Activated CD8-positive, alpha-beta T cell treated with anti-CD3 and anti-CD28 coated beads for 36 hours (primary cell): ENCODE measurements at regions of chr20 and their contacts with region 1.

Region 1: DNA sequence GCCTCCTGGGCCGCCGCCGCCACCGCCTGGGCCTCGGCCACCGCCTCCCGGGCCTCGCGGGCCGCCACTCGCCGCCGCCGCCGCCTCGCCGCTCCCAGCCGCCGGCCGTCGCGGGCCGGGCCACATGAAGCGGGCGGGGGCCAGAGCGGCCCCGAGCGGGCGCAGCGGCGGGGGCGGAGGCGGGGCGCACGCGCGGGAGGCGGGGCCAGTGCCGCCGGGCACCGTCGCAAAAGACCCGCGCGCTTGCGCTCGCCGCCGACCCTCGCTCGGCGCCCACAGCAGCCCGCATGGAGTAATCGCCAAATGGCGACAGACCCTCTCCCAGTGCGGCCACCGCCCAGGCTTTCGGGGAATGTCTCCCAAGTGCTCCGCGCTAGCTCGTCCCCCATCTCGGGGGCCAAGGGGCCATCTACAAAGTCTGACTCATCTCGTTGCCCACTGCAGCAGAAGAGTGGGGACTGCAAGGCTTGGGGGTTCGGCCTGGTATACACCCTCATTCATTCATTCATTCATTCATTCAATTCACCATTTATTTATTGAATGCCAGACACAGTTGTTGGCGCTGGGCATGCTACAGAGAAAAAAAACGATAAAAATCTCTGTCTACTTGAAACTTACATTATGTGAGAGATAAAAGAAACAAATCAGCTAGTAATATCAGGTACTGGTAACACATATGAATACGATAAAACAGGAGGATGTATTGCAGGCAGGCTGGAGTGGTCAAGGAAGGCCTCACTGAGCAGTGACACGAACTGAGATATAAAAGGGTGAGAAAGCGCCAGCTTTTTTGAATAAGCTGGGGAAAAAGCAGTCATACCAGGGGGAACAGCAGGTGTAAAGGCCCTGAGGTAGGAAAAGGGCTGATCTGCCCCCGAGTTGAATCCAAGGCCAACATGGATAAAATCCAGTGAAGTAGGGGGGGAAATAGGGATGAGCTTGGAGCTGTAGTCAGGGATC is at the start of gene B4GALT5:
- DNase-seq: peak; percentile 66
- ATAC-seq: peak; percentile 84
- H3K4me3 Mint-ChIP-seq: peak within 1 kb of the TSS; percentile 87
- H3K27ac Mint-ChIP-seq: peak within 1 kb of the TSS; percentile 90
- H3K4me1 Mint-ChIP-seq: peaks cover 46% of the 10 kb centered on the region
- H3K27me3 Mint-ChIP-seq: no peaks in the 10 kb centered on the region
- CTCF ChIP-seq: no peak
- total RNA-seq, gene B4GALT5: 16.5 to 16.8 TPM

Region 2: GRCh38 chr20:49583669-49584417 is 130.2 kb before region 1 on chr20:
- CTCF ChIA-PET with region 1: no interaction called
- POLR2A ChIA-PET with region 1: no interaction called
- intact Hi-C with region 1: no loop called
- DNase-seq: no peak
- ATAC-seq: peak; percentile 52
- H3K4me3 Mint-ChIP-seq: no peak overlapping the region
- H3K27ac Mint-ChIP-seq: no peak overlapping the region
- H3K4me1 Mint-ChIP-seq: peaks cover 9% of the 10 kb centered on the region
- H3K27me3 Mint-ChIP-seq: peaks cover 22% of the 10 kb centered on the region
- CTCF ChIP-seq: no peak

Region 3: GRCh38 chr20:49668181-49668877 is 45.7 kb before region 1 on chr20:
- CTCF ChIA-PET with region 1: interaction called, 5 read pairs
- POLR2A ChIA-PET with region 1: interaction called, 4 read pairs
- intact Hi-C with region 1: loop called (anchors 5 kb)
- DNase-seq: peak; percentile 86
- ATAC-seq: peak; percentile 85
- H3K4me3 Mint-ChIP-seq: peak overlapping the region; percentile 43
- H3K27ac Mint-ChIP-seq: peak overlapping the region; percentile 13
- H3K4me1 Mint-ChIP-seq: peaks cover 49% of the 10 kb centered on the region
- H3K27me3 Mint-ChIP-seq: no peaks in the 10 kb centered on the region
- CTCF ChIP-seq: no peak

Region 4: GRCh38 chr20:49812463-49813304 is 98.7 kb after region 1 on chr20 and contains the start of gene SLC9A8:
- CTCF ChIA-PET with region 1: no interaction called
- POLR2A ChIA-PET with region 1: no interaction called
- intact Hi-C with region 1: loop called (anchors 10 kb)
- DNase-seq: peak; percentile 94
- ATAC-seq: peak; percentile 92
- H3K4me3 Mint-ChIP-seq: peak within 1 kb of the TSS; percentile 97
- H3K27ac Mint-ChIP-seq: peak within 1 kb of the TSS; percentile 96
- H3K4me1 Mint-ChIP-seq: peaks cover 39% of the 10 kb centered on the region
- H3K27me3 Mint-ChIP-seq: no peaks in the 10 kb centered on the region
- CTCF ChIP-seq: peak; percentile 25
- total RNA-seq, gene SLC9A8: 9.4 to 11.3 TPM